Heart right ventricle (tissue), 16 donors: ENCODE measurements at regions of chrX and their contacts with region 1.

Region 1: DNA sequence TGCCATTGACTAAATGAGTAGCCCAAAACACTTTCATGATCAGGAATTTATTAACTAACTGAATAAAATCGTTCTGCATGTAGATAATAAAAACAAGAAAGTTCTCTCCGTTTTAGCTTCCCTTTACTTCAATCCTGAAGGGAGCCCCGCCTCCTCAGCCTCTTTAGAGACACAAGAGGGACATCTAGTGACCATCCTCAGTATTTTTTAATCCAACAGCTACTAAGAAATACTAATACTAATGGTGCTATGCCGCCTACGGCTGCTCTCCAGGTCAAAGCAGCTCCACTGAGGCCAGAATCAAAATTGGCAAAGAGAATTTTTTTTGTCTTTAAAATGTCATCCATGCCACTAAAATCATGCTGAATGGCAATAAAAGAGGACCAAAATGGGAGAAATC is 3.2 kb upstream of the PCDH19 start:
- DNase-seq: peak in 1 of 2 donors; percentile 26
- ATAC-seq: peak in 3 of 8 donors; percentile 45 to 48 (median 47)
- H3K4me3 ChIP-seq: no peak overlapping the region
- H3K27ac ChIP-seq: no peak overlapping the region
- H3K4me1 ChIP-seq: peaks cover 0 to 32% (median 8%) of the 10 kb centered on the region in 9 donors
- H3K27me3 ChIP-seq: peaks cover 0 to 60% (median 14%) of the 10 kb centered on the region in 7 donors
- CTCF ChIP-seq: peak in 7 of 9 donors; percentile 41 to 66 (median 53)

Region 2: DNA sequence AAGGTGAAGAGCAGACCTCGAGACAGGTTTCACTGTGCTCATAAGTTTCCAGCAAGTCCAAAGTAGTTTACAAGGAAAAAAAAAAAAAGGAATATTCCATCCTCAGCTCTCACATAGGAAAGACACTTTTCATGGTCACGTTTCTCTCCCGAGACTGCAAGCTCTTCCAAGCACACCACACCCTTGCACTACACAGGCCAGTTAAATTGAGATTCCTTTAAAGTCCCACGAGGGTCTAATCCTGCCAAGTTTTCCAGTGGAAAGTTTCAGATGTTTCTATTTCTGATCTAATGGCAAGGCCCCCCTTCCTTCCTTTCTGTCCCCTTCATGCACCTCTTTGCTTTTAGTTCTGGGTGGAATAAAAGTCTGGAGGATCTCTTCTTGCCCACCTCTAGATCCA is 64.7 kb after region 1 on chrX:
- intact Hi-C with region 1: loop called in 1 of 10 experiments (anchors 10 kb)
- DNase-seq: peak in 1 of 2 donors; percentile 25
- ATAC-seq: peak in 7 of 8 donors; percentile 62 to 87 (median 79)
- H3K4me3 ChIP-seq: no peak overlapping the region
- H3K27ac ChIP-seq: peak overlapping the region in 1 of 10 donors; percentile 23
- H3K4me1 ChIP-seq: peaks cover 0 to 17% (median 0%) of the 10 kb centered on the region in 9 donors
- H3K27me3 ChIP-seq: peaks cover 0 to 4% (median 0%) of the 10 kb centered on the region in 7 donors
- CTCF ChIP-seq: no peak